ENCODE measurements at regions of chr1 and their contacts with region 1.

Region 1: GRCh38 chr1:24930204-24931145 is at the start of gene RUNX3:
- DNase-seq: no peak
- ATAC-seq: no peak
- H3K4me3 ChIP-seq: peak within 1 kb of the TSS in 1 of 3 experiments; percentile 49; a peak in 1 of 6 replicates
- H3K27ac ChIP-seq: no peak within 1 kb of the TSS
- H3K4me1 ChIP-seq: peaks cover 13% of the 10 kb centered on the region
- H3K27me3 ChIP-seq: peaks cover 34 to 91% of the 10 kb centered on the region in 2 experiments
- CTCF ChIP-seq: peak; percentile 37
- EP300 ChIP-seq: no peak
- POLR2A ChIP-seq: no peak
- RAD21 ChIP-seq: no peak
- total RNA-seq, gene RUNX3: 0.04 TPM in 1 of 2 replicates, not detected in the other

Region 2: GRCh38 chr1:24830680-24831272 is 99.7 kb before region 1 on chr1:
- CTCF ChIA-PET with region 1: no interaction called
- POLR2A ChIA-PET with region 1: no interaction called
- in situ Hi-C with region 1: no loop called
- intact Hi-C with region 1: no loop called
- DNase-seq: peak; percentile 62
- ATAC-seq: peak; percentile 58; the same call in 2 of the 3 replicates
- H3K4me3 ChIP-seq: no peak overlapping the region
- H3K27ac ChIP-seq: no peak overlapping the region
- H3K4me1 ChIP-seq: peaks cover 5% of the 10 kb centered on the region; the same call in 1 of the 2 replicates
- H3K27me3 ChIP-seq: no peaks in the 10 kb centered on the region
- CTCF ChIP-seq: peak; percentile 77
- EP300 ChIP-seq: no peak
- POLR2A ChIP-seq: no peak
- RAD21 ChIP-seq: peak; percentile 41; the same call in 1 of the 2 replicates

Region 3: GRCh38 chr1:25037174-25038074 is 106.9 kb after region 1 on chr1:
- CTCF ChIA-PET with region 1: interaction called, 18 read pairs
- POLR2A ChIA-PET with region 1: no interaction called
- in situ Hi-C with region 1: loop called (anchors 5 kb)
- intact Hi-C with region 1: loop called (anchors 1 kb)
- DNase-seq: peak; percentile 41
- ATAC-seq: peak; percentile 57
- H3K4me3 ChIP-seq: no peak overlapping the region
- H3K27ac ChIP-seq: no peak overlapping the region
- H3K4me1 ChIP-seq: peaks cover 7% of the 10 kb centered on the region; the same call in 1 of the 2 replicates
- H3K27me3 ChIP-seq: peaks cover 3 to 23% of the 10 kb centered on the region in 2 experiments; a peak in 2 of 5 replicates
- CTCF ChIP-seq: peak; percentile 65
- EP300 ChIP-seq: no peak
- POLR2A ChIP-seq: no peak
- RAD21 ChIP-seq: peak; percentile 26; the same call in 1 of the 2 replicates

Region 4: DNA sequence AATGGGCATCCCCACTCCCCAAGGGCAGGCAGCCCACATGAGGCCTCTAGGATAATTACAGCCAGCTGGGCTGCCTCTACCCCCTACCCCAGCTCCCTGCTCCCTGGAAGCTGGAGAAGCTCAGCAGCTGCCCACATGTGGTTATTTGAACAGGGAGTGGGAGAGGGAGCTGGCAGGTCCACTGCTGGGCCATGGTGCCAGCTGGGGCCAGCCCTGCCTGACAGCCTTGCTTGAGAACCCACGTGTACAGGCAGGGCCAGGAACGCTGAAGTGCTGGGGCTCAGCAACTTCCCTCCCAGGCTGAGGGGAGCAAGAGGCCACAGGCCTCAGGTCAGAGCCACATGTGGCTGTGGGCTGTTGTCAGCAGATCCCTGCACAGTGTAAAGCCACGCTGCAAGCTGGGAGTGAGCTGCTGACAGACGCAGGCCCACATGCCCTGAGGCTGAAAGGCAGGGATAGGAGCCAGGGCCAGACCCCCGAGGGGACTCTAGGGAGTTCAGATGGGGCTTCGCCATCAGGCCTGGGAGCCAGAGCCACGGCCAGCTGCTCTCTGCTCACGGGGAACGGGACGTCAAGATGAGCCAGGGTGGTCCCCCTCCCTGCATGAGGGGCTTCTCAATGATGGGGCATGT is 172.8 kb after region 1 on chr1:
- CTCF ChIA-PET with region 1: interaction called, 8 read pairs
- POLR2A ChIA-PET with region 1: no interaction called
- in situ Hi-C with region 1: loop called (anchors 5 kb)
- intact Hi-C with region 1: no loop called
- DNase-seq: no peak
- ATAC-seq: no peak
- H3K4me3 ChIP-seq: no peak overlapping the region
- H3K27ac ChIP-seq: no peak overlapping the region
- H3K4me1 ChIP-seq: peaks cover 30% of the 10 kb centered on the region
- H3K27me3 ChIP-seq: peaks cover 0 to 26% of the 10 kb centered on the region in 2 experiments; a peak in 3 of 5 replicates
- CTCF ChIP-seq: no peak
- EP300 ChIP-seq: no peak
- POLR2A ChIP-seq: no peak
- RAD21 ChIP-seq: no peak

Measured in HepG2 (cell line).